ENCODE measurements at regions of chr6 and their contacts with region 1.

Region 1: DNA sequence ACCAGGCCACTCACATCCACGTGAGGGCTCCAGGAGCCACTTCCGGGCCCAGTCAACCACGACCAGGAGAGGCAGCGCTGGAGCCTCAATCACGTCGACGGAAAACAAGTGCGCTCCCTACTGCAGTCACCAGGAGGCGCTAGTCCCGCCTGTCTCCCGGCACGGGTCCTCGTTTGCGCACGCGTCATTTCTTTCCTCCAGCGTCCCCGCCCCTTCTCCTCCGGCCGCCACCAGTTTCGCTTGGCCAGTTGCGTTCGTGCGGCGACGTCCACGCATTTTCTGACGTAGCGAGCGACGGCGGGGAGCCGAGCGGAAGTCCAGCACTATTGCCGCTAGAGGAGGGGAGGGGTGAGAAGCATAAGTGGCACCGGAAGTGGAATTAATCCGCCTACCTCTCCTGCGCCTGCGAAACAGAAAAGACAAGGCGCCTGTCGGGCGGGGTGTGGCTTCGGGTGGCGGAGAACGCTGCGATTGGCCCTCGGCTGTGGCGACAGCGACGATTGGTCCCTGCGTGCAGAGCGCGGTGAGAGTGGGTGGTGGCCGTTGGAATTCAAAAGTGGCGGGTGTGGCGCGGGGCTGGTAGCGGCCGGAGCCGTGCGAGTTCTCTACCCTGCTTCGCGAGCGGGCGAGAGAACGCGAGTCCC is at the start of gene KIFC1:
- DNase-seq: peak; percentile 100
- H3K4me3 ChIP-seq: peak within 1 kb of the TSS; percentile 73 to 85 (median 84)
- H3K27ac ChIP-seq: peak within 1 kb of the TSS; percentile 57
- H3K4me1 ChIP-seq: peaks cover 26% of the 10 kb centered on the region
- H3K27me3 ChIP-seq: no peaks in the 10 kb centered on the region
- CTCF ChIP-seq: peak; percentile 98 to 99
- POLR2A ChIP-seq: peak; percentile 28
- total RNA-seq, gene KIFC1: 63.4 and 65.9 TPM in 2 replicates

Region 2: GRCh38 chr6:33323623-33323948 is 67.8 kb before region 1 on chr6:
- CTCF ChIA-PET with region 1: no interaction called
- POLR2A ChIA-PET with region 1: no interaction called
- dilution Hi-C with region 1: no loop called
- intact Hi-C with region 1: loop called (anchors 1 kb)
- DNase-seq: no peak
- H3K4me3 ChIP-seq: peak overlapping the region; percentile 37 to 80 (median 80)
- H3K27ac ChIP-seq: no peak overlapping the region
- H3K4me1 ChIP-seq: peaks cover 43% of the 10 kb centered on the region
- H3K27me3 ChIP-seq: no peaks in the 10 kb centered on the region
- CTCF ChIP-seq: no peak
- POLR2A ChIP-seq: no peak

Region 3: DNA sequence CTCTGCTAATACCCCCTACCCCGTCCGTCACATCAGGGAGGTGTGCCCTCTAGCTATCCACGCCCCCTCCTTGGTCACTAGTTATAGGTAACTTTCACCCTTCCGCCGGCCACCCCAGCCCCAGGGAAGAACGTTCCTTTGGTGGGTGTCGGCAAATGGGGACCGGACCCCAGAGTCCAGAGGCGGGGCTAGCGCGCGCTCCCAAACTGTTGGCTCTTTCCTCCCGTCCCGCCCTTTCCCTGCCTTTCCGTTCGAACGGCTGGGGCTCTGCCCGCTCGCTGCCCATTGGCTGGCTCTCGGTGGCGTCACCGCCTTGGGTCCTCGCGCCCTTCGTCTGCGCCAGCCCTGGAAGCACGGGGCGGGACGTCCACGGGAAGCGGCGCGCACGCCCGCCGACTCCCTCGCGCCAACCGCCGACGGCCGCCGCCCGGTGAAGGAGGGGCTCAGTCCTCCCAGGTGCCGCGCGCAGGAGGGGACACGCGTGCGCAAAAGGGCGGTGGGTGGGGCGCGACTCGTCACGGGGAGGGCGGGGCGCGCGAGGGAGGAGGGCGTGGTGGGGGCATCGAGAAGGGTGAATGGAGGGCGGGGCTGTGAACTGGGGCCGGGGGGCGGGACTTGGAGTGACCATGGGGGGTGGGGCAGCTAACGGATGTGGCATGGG is 18.8 kb after region 1 on chr6:
- CTCF ChIA-PET with region 1: interaction called, 7 read pairs
- POLR2A ChIA-PET with region 1: no interaction called
- dilution Hi-C with region 1: no loop called
- intact Hi-C with region 1: loop called (anchors 1 kb)
- DNase-seq: peak; percentile 99
- H3K4me3 ChIP-seq: peak overlapping the region; percentile 41 to 85 (median 71)
- H3K27ac ChIP-seq: peak overlapping the region; percentile 73
- H3K4me1 ChIP-seq: peaks cover 10% of the 10 kb centered on the region
- H3K27me3 ChIP-seq: no peaks in the 10 kb centered on the region
- CTCF ChIP-seq: no peak
- POLR2A ChIP-seq: peak; percentile 60

Region 4: GRCh38 chr6:33454009-33454946 is 62.9 kb after region 1 on chr6 and contains the start of gene ZBTB9:
- CTCF ChIA-PET with region 1: interaction called, 4 read pairs
- POLR2A ChIA-PET with region 1: no interaction called
- dilution Hi-C with region 1: no loop called
- intact Hi-C with region 1: loop called (anchors 1 kb)
- DNase-seq: peak; percentile 98
- H3K4me3 ChIP-seq: peak within 1 kb of the TSS; percentile 54 to 71 (median 69)
- H3K27ac ChIP-seq: peak within 1 kb of the TSS; percentile 7
- H3K4me1 ChIP-seq: peaks cover 3% of the 10 kb centered on the region
- H3K27me3 ChIP-seq: no peaks in the 10 kb centered on the region
- CTCF ChIP-seq: no peak
- POLR2A ChIP-seq: peak; percentile 94
- total RNA-seq, gene ZBTB9: 8.0 and 8.7 TPM in 2 replicates

Region 5: DNA sequence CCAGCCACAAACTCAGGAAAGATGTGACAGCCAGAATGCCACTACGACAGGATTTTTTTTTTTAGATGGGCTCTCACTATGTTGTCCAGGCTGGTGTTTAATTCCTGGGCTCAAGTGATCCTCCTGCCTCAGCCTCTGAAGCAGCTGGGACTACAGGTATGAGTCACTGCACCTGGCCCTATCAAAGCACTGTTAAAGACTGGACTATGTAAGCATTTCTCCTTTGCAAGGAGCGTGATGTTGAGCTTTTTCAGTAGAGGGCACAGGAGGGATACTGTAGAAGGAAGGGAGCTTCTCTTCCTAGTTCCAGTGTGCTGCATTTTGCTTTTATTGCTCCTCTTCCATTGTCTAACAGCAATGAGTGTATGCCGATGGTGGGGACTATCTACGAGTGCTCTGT is 98.8 kb after region 1 on chr6:
- CTCF ChIA-PET with region 1: no interaction called
- POLR2A ChIA-PET with region 1: no interaction called
- dilution Hi-C with region 1: no loop called
- intact Hi-C with region 1: loop called (anchors 5 kb)
- DNase-seq: no peak
- H3K4me3 ChIP-seq: no peak overlapping the region
- H3K27ac ChIP-seq: no peak overlapping the region
- H3K4me1 ChIP-seq: no peaks in the 10 kb centered on the region
- H3K27me3 ChIP-seq: peaks cover 0 to 4% of the 10 kb centered on the region in 2 experiments
- CTCF ChIP-seq: no peak
- POLR2A ChIP-seq: no peak